Posterior vena cava (tissue), 2 donors: ENCODE measurements at regions of chr16 and their contacts with region 1.

Region 1: DNA sequence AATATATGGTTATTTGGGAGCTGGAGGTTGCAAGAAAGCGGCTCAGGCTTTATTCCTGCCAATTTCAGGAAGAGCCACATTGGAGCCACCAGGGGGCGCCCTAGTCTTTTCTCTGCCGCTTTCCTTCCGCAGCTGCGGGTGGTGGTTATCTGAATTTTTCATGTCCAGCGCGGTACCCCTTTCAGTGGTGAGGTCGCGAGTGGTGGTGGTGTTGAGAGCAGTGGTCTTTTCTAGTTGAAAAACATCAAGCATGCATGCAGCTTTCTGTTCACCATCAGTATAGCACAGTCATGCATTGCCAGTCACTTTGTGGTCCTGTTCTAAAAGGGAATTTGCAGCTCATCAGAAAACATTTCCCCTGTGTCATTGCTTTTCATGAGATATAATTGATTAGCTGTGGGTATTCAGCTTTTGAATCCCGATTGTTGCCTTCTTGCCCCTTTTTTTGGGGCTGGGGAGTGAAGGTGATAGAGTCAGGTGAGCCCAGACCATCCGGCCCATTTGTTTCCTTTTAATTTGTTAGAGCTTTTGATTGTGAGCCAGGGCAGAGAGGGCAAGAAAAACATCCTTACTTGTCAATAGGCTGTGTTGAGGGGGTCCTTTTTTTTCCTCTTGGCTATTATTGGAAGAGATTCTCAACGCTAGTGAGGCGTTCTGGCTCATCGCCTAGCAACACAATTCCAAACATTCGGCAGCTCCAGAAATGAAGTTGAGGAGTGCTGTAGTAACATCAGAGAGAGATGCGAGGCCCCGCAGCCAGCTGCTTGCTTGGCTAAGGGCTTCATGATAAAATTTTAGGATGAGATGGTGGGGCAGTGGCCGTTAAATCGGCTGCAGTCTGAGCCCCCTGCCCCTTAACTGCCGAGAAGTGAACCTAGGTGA is 119.0 kb downstream of the SNX29 start:
- DNase-seq: peak; percentile 91

Region 2: DNA sequence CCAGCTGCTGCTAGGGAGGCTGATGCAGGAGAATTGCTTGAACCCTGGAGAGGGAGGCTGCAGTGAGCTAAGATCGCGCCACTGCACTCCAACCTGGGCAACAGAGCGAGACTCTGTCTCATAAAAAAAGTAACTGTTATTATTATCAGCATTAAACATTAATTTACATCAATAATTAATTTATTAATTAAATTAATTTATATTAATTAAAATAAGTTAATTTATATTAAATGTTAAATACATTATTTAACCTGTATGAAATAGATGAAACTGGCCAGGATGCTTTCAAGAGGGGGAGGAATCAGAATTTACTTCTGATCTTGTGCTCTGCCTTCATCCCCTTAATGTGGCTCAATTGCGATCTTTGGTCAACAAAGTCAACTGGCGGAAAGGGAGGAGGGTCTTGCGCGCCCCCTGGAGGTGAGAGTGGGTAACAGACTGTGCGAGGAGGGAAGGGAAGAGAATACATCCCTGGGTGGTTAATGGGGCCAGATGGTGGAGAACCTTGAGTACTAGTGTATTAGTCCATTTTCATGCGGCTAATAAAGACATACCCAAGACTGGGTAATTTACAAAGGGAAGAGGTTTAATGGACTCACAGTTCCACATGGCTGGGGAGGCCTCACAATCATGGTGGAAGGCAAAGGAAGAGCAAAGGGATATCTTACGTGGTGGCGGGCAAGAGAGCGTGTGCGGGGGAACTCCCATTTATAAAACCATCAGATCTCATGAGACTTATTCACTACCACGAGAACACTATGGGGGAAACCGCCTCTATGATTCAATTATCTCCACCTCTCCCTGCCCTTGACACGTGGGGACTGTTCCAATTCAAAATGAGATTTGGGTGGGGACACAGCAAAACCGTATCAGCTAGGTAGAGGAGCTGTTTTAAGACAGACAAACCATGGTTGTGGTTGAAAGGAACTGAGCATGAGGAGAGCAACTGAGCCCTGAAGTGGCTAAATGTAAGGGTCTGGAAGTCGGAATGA is 723.9 kb after region 1 on chr16:
- intact Hi-C with region 1: loop called in 1 of 2 experiments (anchors 10 kb)
- DNase-seq: peak; percentile 92

Region 3: GRCh38 chr16:13471036-13471435 is 1375.5 kb after region 1 on chr16:
- intact Hi-C with region 1: loop called in 1 of 2 experiments (anchors 10 kb)
- DNase-seq: no peak